CD4-positive, alpha-beta T cell (primary cell): ENCODE measurements at regions of chr11 and their contacts with region 1.

Region 1: DNA sequence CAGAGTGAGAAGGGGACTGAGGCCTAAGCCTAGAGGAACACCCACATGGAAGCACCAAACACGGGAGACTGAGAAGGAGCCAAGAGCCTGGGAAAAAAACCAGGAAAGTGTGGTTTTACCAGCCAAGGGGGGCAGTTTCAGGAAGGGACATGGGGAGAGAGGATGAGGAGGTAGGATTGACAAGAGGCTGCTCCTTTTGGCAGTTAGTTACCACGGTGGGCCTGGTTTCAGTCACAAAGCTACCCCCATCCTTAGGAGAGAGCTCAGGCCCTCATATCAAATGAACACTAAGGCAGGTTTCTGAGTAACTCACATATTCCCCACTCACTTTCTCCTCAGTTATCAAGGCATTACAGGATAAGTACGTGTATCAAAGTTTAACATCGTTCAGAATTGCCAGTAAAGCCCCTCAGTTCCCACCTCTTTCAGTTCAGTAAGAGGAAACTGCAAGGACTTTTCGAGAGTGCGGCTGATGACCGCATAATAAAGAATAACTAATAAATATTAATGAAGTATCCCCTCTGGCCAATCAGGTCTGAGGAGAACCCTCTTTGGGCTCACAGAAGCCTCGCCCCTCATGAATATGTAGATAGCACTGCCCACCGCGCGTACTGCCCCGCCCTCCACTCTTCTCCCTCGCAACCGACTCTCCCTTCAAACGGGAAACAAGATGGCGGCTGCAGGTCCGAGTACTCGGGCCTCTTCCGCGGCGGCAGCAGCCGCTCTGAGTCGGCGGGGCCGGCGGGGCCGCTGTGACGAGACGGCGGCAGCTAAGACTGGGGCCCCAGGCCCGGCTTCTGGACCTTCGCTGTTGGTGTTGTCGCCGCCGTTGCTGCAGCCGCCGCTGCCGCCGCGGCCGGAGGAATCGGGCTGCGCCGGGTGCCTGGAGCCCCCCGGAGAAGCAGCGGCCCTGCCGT is at the start of gene RNF169:
- DNase-seq: peak; percentile 79 to 96 (median 84)
- ATAC-seq: peak; percentile 98
- H3K4me3 ChIP-seq: peak within 1 kb of the TSS; percentile 62
- H3K4me3 Mint-ChIP-seq: peak within 1 kb of the TSS; percentile 99
- H3K27ac ChIP-seq: peak within 1 kb of the TSS; percentile 63 to 76
- H3K27ac Mint-ChIP-seq: peak within 1 kb of the TSS; percentile 78
- H3K4me1 ChIP-seq: peaks cover 33% of the 10 kb centered on the region
- H3K4me1 Mint-ChIP-seq: peaks cover 49% of the 10 kb centered on the region
- H3K27me3 ChIP-seq: no peaks in the 10 kb centered on the region
- H3K27me3 Mint-ChIP-seq: no peaks in the 10 kb centered on the region
- CTCF ChIP-seq: no peak
- total RNA-seq, gene RNF169: 15.2 to 15.5 TPM

Region 2: GRCh38 chr11:73779084-73779902 is 969.2 kb before region 1 on chr11:
- CTCF ChIA-PET with region 1: no interaction called
- POLR2A ChIA-PET with region 1: no interaction called
- intact Hi-C with region 1: loop called in 1 of 2 experiments (anchors 5 kb)
- DNase-seq: peak; percentile 95 to 99 (median 97)
- ATAC-seq: peak; percentile 95
- H3K4me3 ChIP-seq: peak overlapping the region; percentile 78
- H3K4me3 Mint-ChIP-seq: peak overlapping the region; percentile 95
- H3K27ac ChIP-seq: peak overlapping the region; percentile 95 to 99
- H3K27ac Mint-ChIP-seq: peak overlapping the region; percentile 99
- H3K4me1 ChIP-seq: peaks cover 13% of the 10 kb centered on the region
- H3K4me1 Mint-ChIP-seq: peaks cover 14% of the 10 kb centered on the region
- H3K27me3 ChIP-seq: no peaks in the 10 kb centered on the region
- H3K27me3 Mint-ChIP-seq: no peaks in the 10 kb centered on the region
- CTCF ChIP-seq: no peak

Region 3: DNA sequence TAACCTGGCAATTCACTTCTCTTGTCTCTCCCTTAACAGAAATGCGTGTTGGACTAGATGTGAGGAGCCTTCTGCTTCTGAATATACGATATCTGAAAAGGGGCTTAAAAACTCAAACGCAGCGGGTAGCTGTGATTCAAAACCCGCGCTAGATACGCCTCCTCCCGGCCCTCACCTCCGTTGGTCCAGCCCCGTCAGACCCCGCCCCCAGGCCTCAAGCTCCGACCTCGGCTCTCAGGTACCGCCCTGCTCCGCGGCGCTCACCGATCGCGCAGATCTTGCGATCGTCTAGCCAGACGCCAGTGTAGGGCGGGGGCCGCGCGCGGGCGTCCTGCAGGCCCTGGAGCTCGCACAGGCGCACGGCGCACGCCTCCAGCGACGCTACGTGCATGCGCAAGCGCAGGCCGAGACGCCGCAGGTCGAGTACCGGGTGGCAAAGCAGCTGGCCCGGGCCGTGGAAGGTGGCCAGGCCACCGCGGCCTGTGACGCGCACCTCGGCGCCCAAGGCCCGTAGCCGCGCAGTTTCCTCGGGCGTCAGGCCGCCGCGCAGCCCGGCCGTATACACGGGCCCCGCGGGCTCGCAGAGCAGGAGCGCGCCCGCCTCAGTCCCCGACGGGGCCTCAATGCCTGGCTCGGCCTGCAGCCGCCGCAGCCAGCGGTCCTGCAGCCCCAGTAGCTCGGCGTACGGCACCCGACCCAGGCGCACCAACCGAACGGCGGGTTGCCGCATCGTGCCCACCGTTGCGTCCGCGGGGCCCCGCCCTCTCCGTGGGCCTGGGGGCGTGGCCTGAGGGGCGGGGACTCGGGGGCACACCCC is 255.3 kb before region 1 on chr11 and contains the start of gene LIPT2:
- CTCF ChIA-PET with region 1: no interaction called
- POLR2A ChIA-PET with region 1: interaction called, 14 read pairs
- intact Hi-C with region 1: loop called in 1 of 2 experiments (anchors 10 kb)
- DNase-seq: peak; percentile 94 to 99 (median 98)
- ATAC-seq: peak; percentile 95
- H3K4me3 ChIP-seq: peak within 1 kb of the TSS; percentile 66
- H3K4me3 Mint-ChIP-seq: peak within 1 kb of the TSS; percentile 91
- H3K27ac ChIP-seq: peak within 1 kb of the TSS; percentile 61 to 94
- H3K27ac Mint-ChIP-seq: peak within 1 kb of the TSS; percentile 86
- H3K4me1 ChIP-seq: peaks cover 12% of the 10 kb centered on the region
- H3K4me1 Mint-ChIP-seq: peaks cover 41% of the 10 kb centered on the region
- H3K27me3 ChIP-seq: no peaks in the 10 kb centered on the region
- H3K27me3 Mint-ChIP-seq: no peaks in the 10 kb centered on the region
- CTCF ChIP-seq: no peak
- total RNA-seq, gene LIPT2: 10.7 to 10.9 TPM

Region 4: DNA sequence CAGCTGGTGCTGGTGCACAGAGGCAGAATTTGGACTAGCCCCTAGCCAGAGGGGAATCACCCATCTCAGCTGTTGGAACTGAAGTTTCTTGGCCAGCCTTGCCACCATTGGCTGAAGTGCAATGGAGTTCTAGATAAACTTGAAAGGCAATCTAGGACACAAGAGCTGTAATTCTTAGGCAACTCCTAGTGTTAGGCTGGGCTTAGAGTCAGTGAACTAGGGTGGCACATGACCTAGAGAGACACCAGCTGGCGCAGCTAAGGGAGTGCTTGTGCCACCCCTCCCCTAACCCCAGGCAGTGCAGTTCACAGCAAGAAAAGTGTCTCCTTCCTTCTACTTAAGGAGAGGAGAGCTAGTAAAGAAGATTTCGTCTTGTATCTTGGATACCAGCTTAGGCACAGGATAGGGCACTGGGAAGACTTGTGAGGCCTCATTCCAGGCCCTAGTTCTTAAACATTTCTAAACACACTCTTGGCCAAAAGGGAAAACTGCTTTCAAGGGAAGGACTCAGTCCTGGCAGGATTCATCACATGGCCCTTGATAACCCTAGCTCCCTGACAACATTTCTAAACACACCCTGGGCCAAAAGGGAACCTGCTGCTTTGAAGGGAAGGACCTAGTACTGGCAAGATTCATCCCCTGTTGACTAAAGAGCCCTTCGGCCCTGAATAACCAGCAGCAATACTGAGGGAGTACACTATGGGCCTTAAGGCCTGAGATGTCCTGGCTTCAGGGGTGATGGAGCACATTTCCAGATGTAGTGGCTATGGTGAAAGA is 147.1 kb after region 1 on chr11:
- CTCF ChIA-PET with region 1: no interaction called
- POLR2A ChIA-PET with region 1: no interaction called
- intact Hi-C with region 1: no loop called
- DNase-seq: no peak
- ATAC-seq: no peak
- H3K4me3 ChIP-seq: no peak overlapping the region
- H3K4me3 Mint-ChIP-seq: no peak overlapping the region
- H3K27ac ChIP-seq: no peak overlapping the region
- H3K27ac Mint-ChIP-seq: no peak overlapping the region
- H3K4me1 ChIP-seq: no peaks in the 10 kb centered on the region
- H3K4me1 Mint-ChIP-seq: no peaks in the 10 kb centered on the region
- H3K27me3 ChIP-seq: no peaks in the 10 kb centered on the region
- H3K27me3 Mint-ChIP-seq: no peaks in the 10 kb centered on the region
- CTCF ChIP-seq: no peak

Region 5: GRCh38 chr11:74948898-74949747 is 200.7 kb after region 1 on chr11 and contains the starts of genes SPCS2 and XRRA1:
- CTCF ChIA-PET with region 1: no interaction called
- POLR2A ChIA-PET with region 1: no interaction called
- intact Hi-C with region 1: loop called in 1 of 2 experiments (anchors 1 kb)
- DNase-seq: peak; percentile 94 to 99 (median 97)
- ATAC-seq: peak; percentile 96
- H3K4me3 ChIP-seq: peak within 1 kb of the TSS; percentile 85
- H3K4me3 Mint-ChIP-seq: peak within 1 kb of the TSS; percentile 96
- H3K27ac ChIP-seq: peak within 1 kb of the TSS; percentile 71 to 76
- H3K27ac Mint-ChIP-seq: peak within 1 kb of the TSS; percentile 90
- H3K4me1 ChIP-seq: peaks cover 35% of the 10 kb centered on the region
- H3K4me1 Mint-ChIP-seq: peaks cover 65% of the 10 kb centered on the region
- H3K27me3 ChIP-seq: no peaks in the 10 kb centered on the region
- H3K27me3 Mint-ChIP-seq: no peaks in the 10 kb centered on the region
- CTCF ChIP-seq: no peak
- total RNA-seq, gene SPCS2: 36.5 to 42.9 TPM
- total RNA-seq, gene XRRA1: 12.2 to 12.5 TPM

Region 6: GRCh38 chr11:75814686-75815344 is 1066.3 kb after region 1 on chr11 and contains the start of gene UVRAG:
- CTCF ChIA-PET with region 1: no interaction called
- POLR2A ChIA-PET with region 1: no interaction called
- intact Hi-C with region 1: loop called in 1 of 2 experiments (anchors 10 kb)
- DNase-seq: peak; percentile 96 to 99 (median 97)
- ATAC-seq: peak; percentile 86
- H3K4me3 ChIP-seq: peak within 1 kb of the TSS; percentile 88
- H3K4me3 Mint-ChIP-seq: peak within 1 kb of the TSS; percentile 95
- H3K27ac ChIP-seq: peak within 1 kb of the TSS; percentile 78 to 83
- H3K27ac Mint-ChIP-seq: peak within 1 kb of the TSS; percentile 92
- H3K4me1 ChIP-seq: peaks cover 30% of the 10 kb centered on the region
- H3K4me1 Mint-ChIP-seq: peaks cover 29% of the 10 kb centered on the region
- H3K27me3 ChIP-seq: no peaks in the 10 kb centered on the region
- H3K27me3 Mint-ChIP-seq: no peaks in the 10 kb centered on the region
- CTCF ChIP-seq: no peak
- total RNA-seq, gene UVRAG: 16.5 to 19.5 TPM